ENCODE measurements at regions of chr18 and their contacts with region 1.

Region 1: DNA sequence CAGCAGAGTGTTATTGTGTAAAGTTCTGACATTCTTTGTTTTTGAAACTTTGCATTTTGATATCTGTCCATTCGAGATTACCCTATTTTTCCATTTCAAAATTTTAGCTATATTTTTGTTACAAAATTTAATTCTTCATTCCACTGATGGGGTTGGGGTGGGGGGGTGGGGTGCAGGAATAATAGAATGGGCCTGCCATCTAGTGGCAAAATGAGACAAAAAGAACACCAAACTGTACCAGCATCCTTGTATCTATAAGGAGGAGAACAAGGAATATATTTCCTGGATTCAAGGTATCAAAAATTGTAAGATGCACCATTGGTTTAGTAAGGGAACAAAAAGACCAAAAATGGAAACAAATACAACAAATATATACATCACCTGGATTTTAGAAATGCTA is 27.9 kb upstream of the TTR start:
- DNase-seq: no peak
- ATAC-seq: no peak
- H3K4me3 ChIP-seq: no peak overlapping the region
- H3K27ac ChIP-seq: no peak overlapping the region
- H3K4me1 ChIP-seq: peaks cover 0 to 31% (median 5%) of the 10 kb centered on the region in 4 donors
- H3K27me3 ChIP-seq: no peaks in the 10 kb centered on the region
- CTCF ChIP-seq: peak in 3 of 4 donors; percentile 12 to 43 (median 33)
- POLR2A ChIP-seq: no peak

Region 2: GRCh38 chr18:31710826-31711225 is 147.0 kb after region 1 on chr18:
- intact Hi-C with region 1: loop called in 1 of 2 experiments (anchors 10 kb)
- DNase-seq: no peak
- ATAC-seq: peak in 3 of 4 donors; percentile 56 to 68 (median 58)
- H3K4me3 ChIP-seq: no peak overlapping the region
- H3K27ac ChIP-seq: no peak overlapping the region
- H3K4me1 ChIP-seq: peaks cover 0 to 6% (median 0%) of the 10 kb centered on the region in 4 donors
- H3K27me3 ChIP-seq: no peaks in the 10 kb centered on the region
- CTCF ChIP-seq: peak in 2 of 4 donors; percentile 10 to 13
- POLR2A ChIP-seq: no peak

Measured in right lobe of liver (tissue), 6 donors.